AG04450 (cell line): ENCODE measurements at regions of chr19 and their contacts with region 1.

Region 1: GRCh38 chr19:33235269-33235995 is 9.8 kb upstream of the SLC7A10 start:
- DNase-seq: peak; percentile 18
- H3K4me3 ChIP-seq: no peak overlapping the region
- H3K27ac ChIP-seq: no peak overlapping the region
- H3K27me3 ChIP-seq: peaks cover 17% of the 10 kb centered on the region
- CTCF ChIP-seq: peak; percentile 91

Region 2: GRCh38 chr19:33406521-33407139 is 171.2 kb after region 1 on chr19:
- CTCF ChIA-PET with region 1: interaction called, 54 read pairs
- POLR2A ChIA-PET with region 1: no interaction called
- DNase-seq: no peak
- H3K4me3 ChIP-seq: no peak overlapping the region
- H3K27ac ChIP-seq: no peak overlapping the region
- H3K27me3 ChIP-seq: no peaks in the 10 kb centered on the region
- CTCF ChIP-seq: peak; percentile 88

Region 3: GRCh38 chr19:33612928-33613619 is 377.6 kb after region 1 on chr19:
- CTCF ChIA-PET with region 1: no interaction called
- POLR2A ChIA-PET with region 1: no interaction called
- DNase-seq: no peak
- H3K4me3 ChIP-seq: no peak overlapping the region
- H3K27ac ChIP-seq: no peak overlapping the region
- H3K27me3 ChIP-seq: no peaks in the 10 kb centered on the region
- CTCF ChIP-seq: no peak

Region 4: DNA sequence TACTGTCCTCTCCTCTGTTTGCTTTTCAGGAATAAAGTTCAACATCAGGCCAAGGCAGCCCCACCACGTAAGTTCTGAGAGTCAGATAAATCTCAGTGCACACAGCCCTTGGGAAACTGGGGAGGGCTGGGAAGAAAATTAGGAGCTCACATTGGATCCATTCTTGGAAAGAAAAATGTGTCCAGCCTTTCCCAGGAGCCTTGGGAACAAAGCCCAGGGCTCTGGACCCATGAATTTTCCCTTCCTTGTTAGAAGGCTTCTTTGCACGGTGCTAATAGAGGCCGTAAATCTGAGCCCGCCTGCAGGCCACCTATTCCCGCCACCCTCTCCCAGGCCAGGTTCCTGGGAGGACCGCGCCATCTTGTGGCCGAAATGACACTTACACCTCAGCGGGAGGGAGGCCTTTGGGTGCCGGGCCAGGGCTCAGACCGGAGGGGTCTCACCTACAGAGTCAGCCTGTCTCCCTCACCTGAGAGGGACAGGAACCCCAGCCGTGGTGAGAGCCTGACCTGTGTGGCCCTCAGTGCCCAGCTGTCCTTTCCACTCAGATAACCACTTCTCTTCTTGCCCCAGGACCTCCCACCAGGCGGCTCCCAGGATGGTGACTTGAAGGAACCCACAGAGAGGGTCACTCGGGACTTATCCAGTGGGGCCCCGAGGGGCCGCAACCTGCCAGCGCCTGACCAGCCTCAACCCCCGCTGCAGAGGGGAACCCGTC is 536.1 kb after region 1 on chr19:
- CTCF ChIA-PET with region 1: interaction called, 10 read pairs
- POLR2A ChIA-PET with region 1: no interaction called
- DNase-seq: peak; percentile 18
- H3K4me3 ChIP-seq: no peak overlapping the region
- H3K27ac ChIP-seq: peak overlapping the region; percentile 2
- H3K27me3 ChIP-seq: peaks cover 9% of the 10 kb centered on the region
- CTCF ChIP-seq: peak; percentile 84